ENCODE measurements at regions of chr2 and their contacts with region 1.

Region 1: GRCh38 chr2:217993817-217994463 is 8.9 kb downstream of the TNS1 start:
- DNase-seq: peak; percentile 85
- ATAC-seq: peak; percentile 73

Region 2: DNA sequence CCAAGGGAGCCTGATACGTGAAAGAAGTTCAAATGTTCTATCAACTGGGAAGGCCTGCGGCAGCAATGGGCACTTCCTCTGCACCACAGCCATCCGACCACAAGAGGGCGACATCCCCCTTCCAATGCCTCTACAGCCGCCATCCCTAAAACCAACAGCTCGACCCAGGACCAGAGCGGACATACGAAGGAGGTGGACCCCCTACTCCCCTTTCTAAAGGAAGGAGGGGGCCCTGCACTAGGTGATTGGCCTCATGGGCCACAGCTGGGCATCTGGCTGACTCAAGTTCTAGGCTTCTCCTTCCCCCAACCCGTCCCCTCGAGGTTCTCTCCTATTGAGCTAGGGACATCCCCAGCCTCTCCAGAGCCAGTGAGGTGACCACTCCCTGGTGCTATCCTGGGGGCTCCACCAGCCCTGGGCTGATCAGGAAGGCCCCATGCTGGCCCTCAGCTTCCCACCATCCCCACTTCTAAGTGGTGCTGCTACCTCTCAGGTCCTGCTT is 208.3 kb before region 1 on chr2:
- intact Hi-C with region 1: loop called (anchors 5 kb)
- DNase-seq: peak; percentile 92
- ATAC-seq: peak; percentile 85

Region 3: DNA sequence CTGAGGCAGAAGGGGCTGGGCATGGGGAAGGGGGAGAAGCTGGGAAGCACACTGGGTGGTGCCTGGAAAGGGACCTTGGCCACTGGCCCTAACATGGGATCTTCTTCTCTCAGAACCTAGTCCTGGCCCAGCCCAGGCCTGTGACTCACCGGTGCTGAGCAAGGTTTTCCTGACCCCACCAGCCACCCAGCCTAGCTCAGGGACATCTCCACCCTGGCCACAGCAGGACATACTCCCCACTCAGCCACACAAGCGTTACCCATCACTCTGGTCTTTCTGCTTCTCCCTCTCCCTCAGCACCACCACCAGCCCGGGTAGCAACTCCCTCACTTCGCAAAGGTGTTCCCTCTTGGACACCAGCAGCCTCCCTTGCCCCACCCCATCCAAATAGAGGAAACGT is 13.9 kb before region 1 on chr2:
- intact Hi-C with region 1: loop called (anchors 1 kb)
- DNase-seq: peak; percentile 66
- ATAC-seq: peak; percentile 40

Region 4: GRCh38 chr2:218033590-218034496 is 39.9 kb after region 1 on chr2:
- intact Hi-C with region 1: loop called (anchors 5 kb)
- DNase-seq: no peak
- ATAC-seq: no peak